SK-N-SH (cell line): ENCODE measurements at regions of chr1 and their contacts with region 1.

Region 1: GRCh38 chr1:193019442-193020026 is 39.6 kb downstream of the UCHL5 start:
- DNase-seq: peak; percentile 9
- H3K4me3 ChIP-seq: no peak overlapping the region
- H3K27ac ChIP-seq: peak overlapping the region; percentile 10 to 16; a peak in 2 of 4 replicates
- H3K4me1 ChIP-seq: no peaks in the 10 kb centered on the region; a peak in 2 of 4 replicates
- H3K27me3 ChIP-seq: no peaks in the 10 kb centered on the region
- CTCF ChIP-seq: peak; percentile 77
- EP300 ChIP-seq: no peak
- RAD21 ChIP-seq: peak; percentile 79

Region 2: DNA sequence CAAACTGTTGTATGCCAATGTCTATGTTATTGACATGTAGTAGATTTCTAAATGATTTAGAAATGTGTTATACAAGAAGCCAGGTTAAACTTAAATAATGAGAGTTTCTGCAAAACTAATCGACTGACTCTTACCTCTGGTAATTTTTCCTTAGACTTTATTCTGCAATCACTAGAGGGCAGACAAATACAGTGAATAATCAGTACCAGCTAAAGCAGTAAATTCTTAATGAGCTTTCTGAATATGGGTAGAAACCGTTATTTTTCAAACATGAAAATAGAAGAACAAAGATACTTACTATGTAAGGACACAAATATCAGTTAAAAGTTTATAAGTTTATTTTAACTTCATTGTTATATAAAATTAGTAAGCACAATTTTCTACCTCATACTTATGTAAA is 541.9 kb before region 1 on chr1:
- CTCF ChIA-PET with region 1: interaction called, 24 read pairs
- POLR2A ChIA-PET with region 1: no interaction called
- DNase-seq: peak; percentile 31
- H3K4me3 ChIP-seq: no peak overlapping the region
- H3K27ac ChIP-seq: no peak overlapping the region; a peak in 1 of 4 replicates
- H3K4me1 ChIP-seq: peaks cover 0 to 5% of the 10 kb centered on the region in 2 experiments; a peak in 2 of 4 replicates
- H3K27me3 ChIP-seq: no peaks in the 10 kb centered on the region
- CTCF ChIP-seq: peak; percentile 80
- EP300 ChIP-seq: no peak
- RAD21 ChIP-seq: peak; percentile 92

Region 3: GRCh38 chr1:192801451-192801850 is 218.1 kb before region 1 on chr1:
- CTCF ChIA-PET with region 1: interaction called, 104 read pairs
- POLR2A ChIA-PET with region 1: no interaction called
- DNase-seq: no peak
- H3K4me3 ChIP-seq: no peak overlapping the region
- H3K27ac ChIP-seq: no peak overlapping the region
- H3K4me1 ChIP-seq: no peaks in the 10 kb centered on the region; a peak in 1 of 4 replicates
- H3K27me3 ChIP-seq: no peaks in the 10 kb centered on the region
- CTCF ChIP-seq: no peak
- EP300 ChIP-seq: no peak
- RAD21 ChIP-seq: no peak

Region 4: DNA sequence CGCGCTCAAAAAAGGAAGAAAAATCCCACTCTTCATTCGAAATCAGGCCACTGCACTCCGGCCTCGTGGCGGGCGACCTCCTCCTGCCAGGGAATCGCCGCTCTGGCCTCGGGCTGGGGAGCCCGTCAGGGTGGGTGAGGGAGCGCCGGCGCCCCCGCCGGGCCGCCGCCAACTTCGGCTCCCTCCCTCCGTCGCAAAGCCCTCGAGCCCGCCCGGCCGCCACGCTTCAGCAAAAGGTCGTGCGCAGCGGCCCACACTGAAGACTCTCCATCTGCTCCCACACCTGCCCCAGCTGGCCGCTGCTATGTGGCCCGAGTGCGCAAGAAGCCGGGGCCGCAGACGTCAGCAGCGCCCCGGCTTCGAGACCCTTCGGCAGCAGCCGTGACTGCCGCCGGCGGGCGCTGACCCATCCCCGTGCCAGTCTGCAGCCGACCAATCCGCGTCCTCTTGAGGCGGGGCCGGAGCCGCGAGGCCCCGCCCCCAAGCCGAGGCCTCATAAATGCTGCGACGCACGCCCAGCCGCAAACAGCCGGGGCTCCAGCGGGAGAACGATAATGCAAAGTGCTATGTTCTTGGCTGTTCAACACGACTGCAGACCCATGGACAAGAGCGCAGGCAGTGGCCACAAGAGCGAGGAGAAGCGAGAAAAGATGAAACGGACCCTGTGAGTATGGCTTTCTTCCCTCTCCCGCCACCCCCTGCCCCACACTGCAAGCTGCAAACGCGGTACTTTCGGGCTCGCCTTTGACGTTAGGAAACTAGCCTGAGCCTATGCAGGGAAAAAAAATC is 210.8 kb before region 1 on chr1 and contains the start of gene RGS2:
- CTCF ChIA-PET with region 1: interaction called, 104 read pairs
- POLR2A ChIA-PET with region 1: no interaction called
- DNase-seq: peak; percentile 96
- H3K4me3 ChIP-seq: peak within 1 kb of the TSS; percentile 69 to 92
- H3K27ac ChIP-seq: peak within 1 kb of the TSS; percentile 81 to 89
- H3K4me1 ChIP-seq: peaks cover 19 to 20% of the 10 kb centered on the region in 2 experiments; a peak in 3 of 4 replicates
- H3K27me3 ChIP-seq: no peaks in the 10 kb centered on the region
- CTCF ChIP-seq: peak; percentile 42
- EP300 ChIP-seq: no peak
- RAD21 ChIP-seq: peak; percentile 30
- polyA plus RNA-seq, gene RGS2: 47.1 and 53.9 TPM in 2 replicates

Region 5: GRCh38 chr1:193009501-193009900 is 10.0 kb before region 1 on chr1:
- CTCF ChIA-PET with region 1: interaction called, 14 read pairs
- POLR2A ChIA-PET with region 1: no interaction called
- DNase-seq: no peak
- H3K4me3 ChIP-seq: no peak overlapping the region
- H3K27ac ChIP-seq: no peak overlapping the region
- H3K4me1 ChIP-seq: peaks cover 0 to 3% of the 10 kb centered on the region in 2 experiments; a peak in 3 of 4 replicates
- H3K27me3 ChIP-seq: no peaks in the 10 kb centered on the region
- CTCF ChIP-seq: no peak
- EP300 ChIP-seq: no peak
- RAD21 ChIP-seq: no peak